ENCODE measurements at regions of chr11 and their contacts with region 1.

Region 1: GRCh38 chr11:76762867-76763572 is 20.1 kb upstream of the TSKU start:
- DNase-seq: peak; percentile 61

Region 2: DNA sequence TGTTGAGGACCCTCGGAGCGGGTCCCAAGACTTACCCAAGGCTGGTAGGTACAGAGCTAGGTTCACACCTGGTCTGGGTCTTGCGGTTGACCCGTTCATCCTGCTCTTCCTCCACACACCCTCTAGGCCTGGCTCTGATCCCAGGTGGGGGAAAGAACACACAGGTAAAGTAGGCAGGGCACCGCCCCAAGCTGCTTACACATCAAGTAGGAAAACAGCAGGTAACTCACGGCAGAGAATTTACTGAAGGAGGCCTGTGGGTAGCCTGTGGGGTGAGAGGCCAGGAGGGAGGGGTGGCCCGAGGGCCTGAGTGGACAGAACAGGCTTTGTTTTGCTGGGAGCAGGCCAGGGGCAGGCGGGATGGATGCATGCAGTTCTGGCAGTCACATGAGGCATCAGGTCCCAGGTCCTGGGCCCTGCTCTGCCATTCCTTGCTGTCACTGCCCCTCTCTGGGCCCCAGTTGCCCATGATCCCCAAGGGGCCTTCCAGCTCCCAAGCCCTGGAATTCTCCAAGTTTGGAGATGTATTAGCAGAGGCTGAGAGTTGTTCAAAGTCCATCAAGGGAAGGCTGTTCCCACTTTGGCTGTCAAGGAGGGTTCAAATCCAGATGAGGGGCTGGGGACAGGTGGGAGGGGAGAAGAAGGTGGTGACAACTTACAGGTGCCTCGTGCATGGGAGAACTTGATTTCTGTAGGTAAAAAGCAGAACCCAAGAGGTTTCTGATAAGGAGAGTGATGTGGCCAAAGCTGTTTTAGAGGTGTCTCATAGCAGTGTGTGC is 25.8 kb after region 1 on chr11:
- intact Hi-C with region 1: loop called in 1 of 2 experiments (anchors 1 kb)
- DNase-seq: peak; percentile 76

Measured in posterior vena cava (tissue), 2 donors.